ENCODE measurements at regions of chr3 and their contacts with region 1.

Region 1: DNA sequence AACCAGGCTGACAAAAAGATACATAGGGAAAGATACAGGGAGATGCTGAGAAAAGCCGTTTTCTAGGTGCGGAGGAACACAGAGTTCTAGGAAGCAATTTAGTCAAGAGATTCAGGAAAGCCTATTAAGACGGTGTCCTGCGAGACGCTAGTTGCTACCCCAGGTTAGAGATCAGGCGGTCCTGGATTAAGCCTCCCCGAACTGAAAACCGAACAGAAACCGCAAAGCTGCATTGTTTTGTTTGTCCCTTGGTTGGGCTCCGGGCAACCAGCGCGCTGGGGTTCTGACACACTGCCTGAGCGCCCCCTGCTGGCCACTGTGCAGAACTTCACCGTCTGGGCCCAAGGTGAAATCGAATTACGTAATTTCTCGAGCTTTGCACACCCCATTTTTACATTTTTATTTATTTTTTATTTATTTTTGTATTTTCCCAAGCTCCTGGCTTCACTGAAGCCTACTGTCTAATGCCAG is 37.3 kb upstream of the NDUFB4 start:
- DNase-seq: peak; percentile 84 to 86 (median 86)
- ATAC-seq: peak; percentile 95
- H3K4me3 ChIP-seq: no peak overlapping the region
- H3K4me1 ChIP-seq: no peaks in the 10 kb centered on the region
- CTCF ChIP-seq: peak; percentile 99

Region 2: GRCh38 chr3:120245386-120245785 is 313.4 kb before region 1 on chr3:
- intact Hi-C with region 1: loop called (anchors 5 to 10 kb)
- DNase-seq: no peak
- ATAC-seq: no peak
- H3K4me3 ChIP-seq: no peak overlapping the region
- H3K4me1 ChIP-seq: no peaks in the 10 kb centered on the region
- CTCF ChIP-seq: no peak

Region 3: GRCh38 chr3:120460862-120461261 is 97.9 kb before region 1 on chr3:
- intact Hi-C with region 1: no loop called
- DNase-seq: no peak
- ATAC-seq: no peak
- H3K4me3 ChIP-seq: no peak overlapping the region
- H3K4me1 ChIP-seq: peaks cover 3% of the 10 kb centered on the region
- CTCF ChIP-seq: no peak

Region 4: DNA sequence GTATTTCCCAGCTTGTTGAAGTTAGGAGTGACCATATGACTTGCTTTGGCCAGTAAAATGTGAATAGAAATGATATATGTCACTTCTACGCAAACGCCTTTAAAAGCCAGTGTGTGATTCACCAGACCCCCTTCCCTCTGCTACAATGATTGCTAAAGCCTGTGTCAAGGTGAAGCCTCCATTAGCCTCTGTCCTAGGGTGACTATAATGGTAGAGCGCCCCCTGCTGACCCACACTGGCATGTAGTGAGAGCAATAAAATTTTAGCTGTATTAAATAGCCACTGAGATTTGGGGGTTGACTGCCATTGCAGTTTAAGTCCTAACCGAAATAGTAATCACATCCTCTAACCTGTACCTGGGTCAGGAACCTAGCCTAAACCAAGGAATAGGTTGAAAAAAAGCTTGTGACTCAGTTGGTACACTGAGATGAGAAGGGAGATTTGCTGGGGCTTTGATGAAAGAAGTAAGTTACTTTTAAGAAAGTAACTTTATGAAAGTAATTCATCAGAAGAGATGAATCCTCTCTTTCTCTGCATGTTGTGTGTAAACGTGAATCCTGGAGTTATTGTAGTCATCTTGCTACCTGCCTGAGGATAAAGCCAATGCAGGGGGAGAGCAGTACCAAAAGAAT is 236.3 kb after region 1 on chr3:
- intact Hi-C with region 1: loop called in 1 of 2 experiments (anchors 10 kb)
- DNase-seq: peak in 2 of 3 donors; percentile 72 to 89
- ATAC-seq: peak; percentile 52
- H3K4me3 ChIP-seq: no peak overlapping the region
- H3K4me1 ChIP-seq: peaks cover 9% of the 10 kb centered on the region
- CTCF ChIP-seq: peak; percentile 58

Measured in mucosa of descending colon (tissue), 3 donors.